Heart left ventricle (tissue), 16 donors: ENCODE measurements at regions of chr16 and their contacts with region 1.

Region 1: DNA sequence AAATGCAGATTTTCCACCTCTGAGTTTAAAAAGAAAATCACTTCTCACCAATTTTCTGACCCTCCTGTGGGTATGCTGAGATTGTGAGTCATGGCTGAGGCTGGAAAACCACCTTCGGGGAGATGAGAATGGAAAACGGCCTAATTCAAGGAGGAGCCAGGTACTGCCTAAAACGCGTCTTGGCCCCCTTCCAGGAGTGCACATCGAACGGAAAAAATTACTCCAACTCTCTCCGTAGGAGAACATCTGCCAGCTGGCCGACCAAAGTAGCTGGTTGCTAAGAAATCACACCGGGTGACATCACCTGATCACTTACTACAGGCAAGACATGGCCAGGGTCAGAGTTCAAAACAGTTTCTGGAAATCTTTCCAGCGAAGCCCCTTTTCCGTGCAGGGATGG is 107.6 kb downstream of the ZNF423 start:
- DNase-seq: peak in 3 of 5 donors; percentile 25 to 39 (median 36)
- ATAC-seq: no peak
- H3K4me3 ChIP-seq: no peak overlapping the region
- H3K27ac ChIP-seq: no peak overlapping the region
- H3K4me1 ChIP-seq: peaks cover 0 to 29% (median 10%) of the 10 kb centered on the region in 12 donors
- H3K27me3 ChIP-seq: peaks cover 0 to 13% (median 0%) of the 10 kb centered on the region in 9 donors
- CTCF ChIP-seq: no peak
- POLR2A ChIP-seq: no peak

Region 2: GRCh38 chr16:49617016-49617629 is 131.2 kb before region 1 on chr16:
- intact Hi-C with region 1: loop called in 1 of 10 experiments (anchors 10 kb)
- DNase-seq: no peak
- ATAC-seq: no peak
- H3K4me3 ChIP-seq: no peak overlapping the region
- H3K27ac ChIP-seq: no peak overlapping the region
- H3K4me1 ChIP-seq: peaks cover 0 to 26% (median 16%) of the 10 kb centered on the region in 12 donors
- H3K27me3 ChIP-seq: no peaks in the 10 kb centered on the region
- CTCF ChIP-seq: no peak
- POLR2A ChIP-seq: no peak

Region 3: DNA sequence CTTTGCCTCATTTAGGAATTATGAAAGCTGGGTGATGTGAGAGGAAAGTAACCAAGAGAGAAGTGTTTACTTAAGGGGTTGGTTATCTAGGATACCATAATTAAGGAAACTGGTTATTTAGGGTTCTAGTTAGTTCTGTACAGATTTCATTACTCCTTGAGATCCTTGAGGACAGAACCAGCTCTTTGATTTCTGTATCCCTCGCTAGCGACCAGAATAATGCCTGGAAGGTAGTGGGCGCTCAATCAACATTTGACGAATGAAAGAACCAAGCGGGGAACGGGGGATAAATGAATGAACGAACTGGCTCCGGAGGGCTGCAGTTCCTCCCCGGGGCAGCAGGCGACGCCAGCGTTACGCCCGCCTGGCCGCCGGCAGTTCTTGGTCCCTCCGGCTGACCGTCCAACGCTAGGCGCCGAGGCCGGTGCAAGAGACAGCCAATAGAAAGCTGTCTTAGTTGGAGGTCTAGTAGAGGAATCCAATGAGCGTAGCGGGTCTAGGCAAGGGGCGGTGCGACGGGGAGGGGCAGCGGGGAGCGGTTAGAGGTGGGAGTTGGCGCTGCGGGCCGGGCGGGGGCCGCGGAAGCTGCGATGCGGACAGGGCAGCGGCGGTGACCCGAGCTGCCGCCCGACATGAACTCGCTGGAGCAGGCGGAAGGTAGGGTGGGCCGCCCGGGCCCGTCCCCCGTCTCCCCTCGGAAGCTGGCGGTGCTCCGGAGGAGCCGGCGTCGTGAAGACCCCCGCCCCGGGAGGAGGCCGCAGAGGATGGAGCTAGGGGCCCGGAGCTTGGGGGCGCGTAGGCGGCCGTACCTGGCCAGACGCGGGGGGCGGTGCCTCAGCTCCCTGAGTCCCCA is 276.6 kb after region 1 on chr16 and contains the start of gene CNEP1R1:
- intact Hi-C with region 1: no loop called
- DNase-seq: peak; percentile 94 to 96 (median 95)
- ATAC-seq: peak; percentile 100
- H3K4me3 ChIP-seq: peak within 1 kb of the TSS; percentile 64 to 99 (median 90)
- H3K27ac ChIP-seq: peak within 1 kb of the TSS; percentile 51 to 94 (median 82)
- H3K4me1 ChIP-seq: peaks cover 0 to 23% (median 16%) of the 10 kb centered on the region in 12 donors
- H3K27me3 ChIP-seq: peaks cover 0 to 5% (median 0%) of the 10 kb centered on the region in 9 donors
- CTCF ChIP-seq: peak; percentile 99 to 100 (median 100)
- POLR2A ChIP-seq: peak in 1 of 2 donors; percentile 78
- total RNA-seq, gene CNEP1R1: 10.9 to 23.9 (median 17.9) TPM